ENCODE measurements at regions of chr16 and their contacts with region 1.

Region 1: GRCh38 chr16:69424053-69424934 is at the start of gene CYB5B:
- DNase-seq: peak; percentile 95 to 99 (median 97)
- H3K4me3 ChIP-seq: peak within 1 kb of the TSS; percentile 84 to 90
- H3K4me3 Mint-ChIP-seq: peak within 1 kb of the TSS; percentile 93 to 98 (median 96)
- H3K27ac ChIP-seq: peak within 1 kb of the TSS; percentile 71
- H3K27ac Mint-ChIP-seq: peak within 1 kb of the TSS; percentile 85 to 99 (median 96)
- H3K4me1 ChIP-seq: peaks cover 19% of the 10 kb centered on the region
- H3K4me1 Mint-ChIP-seq: peaks cover 23 to 45% (median 26%) of the 10 kb centered on the region in 4 donors
- H3K27me3 ChIP-seq: no peaks in the 10 kb centered on the region
- H3K27me3 Mint-ChIP-seq: no peaks in the 10 kb centered on the region
- total RNA-seq, gene CYB5B: 59.2 to 64.4 TPM

Region 2: GRCh38 chr16:69339289-69340108 is 84.8 kb before region 1 on chr16 and contains the starts of genes COG8 and NIP7:
- CTCF ChIA-PET with region 1: no interaction called
- POLR2A ChIA-PET with region 1: no interaction called
- intact Hi-C with region 1: loop called (anchors 10 kb)
- DNase-seq: peak; percentile 90 to 94 (median 91)
- H3K4me3 ChIP-seq: peak within 1 kb of the TSS; percentile 77 to 97
- H3K4me3 Mint-ChIP-seq: peak within 1 kb of the TSS; percentile 96 to 100 (median 100)
- H3K27ac ChIP-seq: peak within 1 kb of the TSS; percentile 81
- H3K27ac Mint-ChIP-seq: peak within 1 kb of the TSS; percentile 96 to 100 (median 99)
- H3K4me1 ChIP-seq: peaks cover 39% of the 10 kb centered on the region
- H3K4me1 Mint-ChIP-seq: peaks cover 34 to 74% (median 51%) of the 10 kb centered on the region in 4 donors
- H3K27me3 ChIP-seq: no peaks in the 10 kb centered on the region
- H3K27me3 Mint-ChIP-seq: no peaks in the 10 kb centered on the region
- total RNA-seq, gene COG8: 66.0 to 66.1 TPM
- total RNA-seq, gene NIP7: 30.9 to 31.9 TPM

Region 3: GRCh38 chr16:69386596-69386995 is 37.7 kb before region 1 on chr16:
- CTCF ChIA-PET with region 1: no interaction called
- POLR2A ChIA-PET with region 1: no interaction called
- intact Hi-C with region 1: loop called (anchors 1 kb)
- DNase-seq: no peak
- H3K4me3 ChIP-seq: no peak overlapping the region
- H3K4me3 Mint-ChIP-seq: peak overlapping the region in 6 of 8 donors; percentile 48 to 98 (median 91)
- H3K27ac ChIP-seq: peak overlapping the region; percentile 81
- H3K27ac Mint-ChIP-seq: peak overlapping the region in 5 of 7 donors; percentile 59 to 98 (median 96)
- H3K4me1 ChIP-seq: peaks cover 30% of the 10 kb centered on the region
- H3K4me1 Mint-ChIP-seq: peaks cover 17 to 41% (median 27%) of the 10 kb centered on the region in 4 donors
- H3K27me3 ChIP-seq: no peaks in the 10 kb centered on the region
- H3K27me3 Mint-ChIP-seq: no peaks in the 10 kb centered on the region

Region 4: DNA sequence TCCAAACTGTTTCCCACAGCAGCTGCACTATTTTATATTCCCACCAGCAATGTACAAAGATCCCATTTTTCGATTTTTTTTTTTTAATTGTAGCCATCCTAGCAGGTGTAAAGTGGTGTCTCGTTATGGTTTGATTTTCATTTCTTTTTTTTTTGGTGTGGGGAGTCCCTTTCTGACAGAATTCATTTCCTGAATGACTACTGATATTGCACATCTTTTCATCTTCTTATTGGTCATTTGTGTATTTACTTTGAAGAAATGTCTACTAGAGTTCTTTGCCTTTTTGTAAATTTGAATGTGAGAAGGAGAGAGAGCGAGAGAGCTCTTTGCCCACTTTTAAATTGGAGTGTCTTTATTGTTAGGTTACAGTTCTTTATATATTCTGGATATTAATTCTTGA is 14.2 kb after region 1 on chr16:
- CTCF ChIA-PET with region 1: interaction called, 4 read pairs
- POLR2A ChIA-PET with region 1: interaction called, 54 read pairs
- intact Hi-C with region 1: no loop called
- DNase-seq: no peak
- H3K4me3 ChIP-seq: no peak overlapping the region
- H3K4me3 Mint-ChIP-seq: peak overlapping the region in 2 of 8 donors; percentile 5 to 21
- H3K27ac ChIP-seq: no peak overlapping the region
- H3K27ac Mint-ChIP-seq: peak overlapping the region; percentile 2 to 93 (median 33)
- H3K4me1 ChIP-seq: peaks cover 41% of the 10 kb centered on the region
- H3K4me1 Mint-ChIP-seq: peaks cover 36 to 75% (median 60%) of the 10 kb centered on the region in 4 donors
- H3K27me3 ChIP-seq: no peaks in the 10 kb centered on the region
- H3K27me3 Mint-ChIP-seq: no peaks in the 10 kb centered on the region

Region 5: DNA sequence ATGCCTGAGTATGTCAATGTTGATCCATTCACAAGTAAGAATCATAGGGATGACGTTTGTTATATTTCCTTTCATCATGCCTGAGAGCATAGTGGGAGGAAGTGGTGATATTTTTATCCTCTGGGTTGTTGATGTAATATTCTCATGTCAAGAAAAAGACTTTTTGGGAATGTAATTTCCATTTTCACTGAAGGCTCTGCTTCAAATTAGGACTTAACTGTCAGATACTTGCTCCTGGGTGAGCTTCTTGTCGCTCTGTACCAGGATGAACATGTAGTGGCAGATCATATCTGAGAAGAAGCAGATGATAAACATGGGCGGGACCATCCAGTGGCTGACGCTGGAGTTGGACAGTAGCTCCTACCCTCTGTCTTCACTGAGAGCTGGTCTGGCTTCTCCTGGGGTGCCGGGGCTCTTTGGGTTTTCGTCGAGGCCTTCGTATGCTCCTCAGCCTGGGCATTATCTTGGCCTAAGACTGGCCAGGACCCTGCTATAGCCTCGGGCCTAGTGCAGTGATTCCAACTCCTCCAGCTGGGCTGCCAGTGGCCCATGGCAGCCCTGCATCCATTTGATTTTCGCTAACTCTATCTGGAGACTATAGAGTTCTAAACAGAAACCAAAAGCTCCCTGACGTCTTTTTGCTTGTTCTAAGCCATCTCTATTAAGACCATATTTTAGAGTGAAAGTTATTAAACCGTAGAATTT is 19.8 kb after region 1 on chr16:
- CTCF ChIA-PET with region 1: interaction called, 4 read pairs
- POLR2A ChIA-PET with region 1: interaction called, 54 read pairs
- intact Hi-C with region 1: loop called (anchors 1 kb)
- DNase-seq: peak; percentile 31 to 66 (median 40)
- H3K4me3 ChIP-seq: peak overlapping the region; percentile 26 to 39
- H3K4me3 Mint-ChIP-seq: peak overlapping the region; percentile 83 to 91 (median 86)
- H3K27ac ChIP-seq: peak overlapping the region; percentile 70
- H3K27ac Mint-ChIP-seq: peak overlapping the region; percentile 94 to 99 (median 98)
- H3K4me1 ChIP-seq: peaks cover 26% of the 10 kb centered on the region
- H3K4me1 Mint-ChIP-seq: peaks cover 32 to 48% (median 41%) of the 10 kb centered on the region in 4 donors
- H3K27me3 ChIP-seq: no peaks in the 10 kb centered on the region
- H3K27me3 Mint-ChIP-seq: no peaks in the 10 kb centered on the region

Measured in CD4-positive, alpha-beta memory T cell (primary cell).